CD8-positive, alpha-beta T cell (primary cell): ENCODE measurements at regions of chr17 and their contacts with region 1.

Region 1: DNA sequence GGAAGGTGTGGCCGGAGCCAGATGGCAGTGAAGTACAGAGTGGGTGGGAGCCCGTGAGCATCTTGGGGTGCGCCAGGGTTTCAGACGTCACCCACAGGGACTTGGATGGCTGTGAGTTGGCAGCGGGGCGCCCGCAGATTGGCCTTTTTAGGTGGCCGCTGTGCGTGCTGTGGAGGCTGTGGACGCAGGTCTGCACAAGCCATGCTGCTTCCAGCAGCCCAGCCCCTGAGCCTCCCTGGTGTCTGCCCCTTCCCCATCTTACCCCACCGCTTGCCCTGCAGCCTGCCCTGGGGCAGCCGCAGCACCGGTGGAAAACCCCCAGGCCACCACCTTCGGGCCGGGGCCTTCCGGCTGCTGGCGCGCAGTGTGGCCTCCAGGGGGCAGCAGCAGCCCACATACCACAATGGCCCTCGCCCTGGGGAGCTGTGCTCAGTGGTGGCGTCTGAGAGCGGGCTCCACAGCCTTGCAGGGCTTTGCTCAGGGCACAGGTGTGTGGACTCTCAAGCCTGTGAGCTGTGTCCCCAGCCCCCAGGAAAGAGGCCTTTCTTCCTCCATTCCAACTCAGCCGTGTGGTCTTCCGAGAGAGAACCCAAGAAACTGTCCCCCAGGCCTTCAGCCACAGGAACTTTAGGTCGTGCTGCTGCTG is 11.8 kb downstream of the ENDOV start:
- DNase-seq: peak; percentile 77 to 91 (median 85)
- ATAC-seq: peak; percentile 98
- H3K4me3 ChIP-seq: no peak overlapping the region
- H3K4me3 Mint-ChIP-seq: no peak overlapping the region
- H3K27ac ChIP-seq: no peak overlapping the region
- H3K27ac Mint-ChIP-seq: no peak overlapping the region
- H3K4me1 ChIP-seq: peaks cover 11% of the 10 kb centered on the region
- H3K4me1 Mint-ChIP-seq: peaks cover 9% of the 10 kb centered on the region
- H3K27me3 ChIP-seq: no peaks in the 10 kb centered on the region
- H3K27me3 Mint-ChIP-seq: no peaks in the 10 kb centered on the region
- CTCF ChIP-seq: peak; percentile 85

Region 2: GRCh38 chr17:80414803-80415625 is 11.8 kb before region 1 on chr17 and contains the start of gene ENDOV:
- CTCF ChIA-PET with region 1: interaction called, 5 read pairs
- POLR2A ChIA-PET with region 1: interaction called, 4 read pairs
- intact Hi-C with region 1: loop called in 1 of 2 experiments (anchors 1 kb)
- DNase-seq: peak; percentile 87 to 99 (median 95)
- ATAC-seq: peak; percentile 83
- H3K4me3 ChIP-seq: peak within 1 kb of the TSS; percentile 79 to 97
- H3K4me3 Mint-ChIP-seq: peak within 1 kb of the TSS; percentile 85
- H3K27ac ChIP-seq: peak within 1 kb of the TSS; percentile 82 to 87
- H3K27ac Mint-ChIP-seq: peak within 1 kb of the TSS; percentile 87
- H3K4me1 ChIP-seq: peaks cover 18% of the 10 kb centered on the region
- H3K4me1 Mint-ChIP-seq: peaks cover 26% of the 10 kb centered on the region
- H3K27me3 ChIP-seq: peaks cover 0 to 4% of the 10 kb centered on the region in 2 experiments
- H3K27me3 Mint-ChIP-seq: no peaks in the 10 kb centered on the region
- CTCF ChIP-seq: no peak
- total RNA-seq, gene ENDOV: 8.2 to 11.6 TPM

Region 3: DNA sequence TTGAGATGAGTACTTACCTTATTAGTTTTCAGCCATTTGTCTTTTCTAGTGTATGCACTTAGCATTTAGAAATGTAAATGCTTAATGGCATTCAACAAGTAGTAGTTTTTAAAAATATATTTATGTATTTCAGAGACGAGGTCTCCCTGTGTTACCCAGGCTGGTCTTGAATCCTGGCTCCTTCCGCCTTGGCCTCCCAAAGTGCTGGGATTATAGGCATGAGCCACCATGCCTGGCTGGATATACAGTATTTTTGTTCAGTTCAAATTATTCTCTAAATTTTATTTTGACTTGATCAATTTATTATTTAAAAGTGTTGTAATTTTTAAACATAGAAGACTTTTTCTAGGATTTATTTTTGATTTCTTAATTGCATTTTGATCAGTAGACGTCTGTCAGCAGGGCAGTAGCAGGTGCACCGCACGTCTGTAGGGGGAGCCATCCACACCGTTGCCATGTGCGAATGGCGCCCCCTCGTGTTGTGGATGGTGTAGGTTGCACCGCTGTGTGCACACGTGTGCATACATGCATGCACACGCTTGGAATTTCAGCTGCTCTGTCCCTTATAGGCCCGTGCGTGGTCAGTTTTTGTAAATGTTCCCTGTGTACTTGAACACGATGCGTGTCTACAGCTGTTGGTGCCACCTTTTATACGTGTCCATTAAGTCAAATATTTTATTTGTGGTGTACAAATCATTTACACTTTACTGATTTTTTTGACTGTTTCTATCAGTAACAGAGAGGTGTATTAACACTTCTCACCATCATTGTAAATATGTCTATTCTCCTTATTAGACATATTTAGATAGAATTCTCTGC is 148.5 kb after region 1 on chr17:
- CTCF ChIA-PET with region 1: interaction called, 9 read pairs
- POLR2A ChIA-PET with region 1: no interaction called
- intact Hi-C with region 1: loop called (anchors 1 to 2 kb)
- DNase-seq: peak; percentile 80 to 94 (median 92)
- ATAC-seq: peak; percentile 100
- H3K4me3 ChIP-seq: no peak overlapping the region
- H3K4me3 Mint-ChIP-seq: no peak overlapping the region
- H3K27ac ChIP-seq: no peak overlapping the region
- H3K27ac Mint-ChIP-seq: no peak overlapping the region
- H3K4me1 ChIP-seq: no peaks in the 10 kb centered on the region
- H3K4me1 Mint-ChIP-seq: peaks cover 9% of the 10 kb centered on the region
- H3K27me3 ChIP-seq: no peaks in the 10 kb centered on the region
- H3K27me3 Mint-ChIP-seq: no peaks in the 10 kb centered on the region
- CTCF ChIP-seq: peak; percentile 100

Region 4: DNA sequence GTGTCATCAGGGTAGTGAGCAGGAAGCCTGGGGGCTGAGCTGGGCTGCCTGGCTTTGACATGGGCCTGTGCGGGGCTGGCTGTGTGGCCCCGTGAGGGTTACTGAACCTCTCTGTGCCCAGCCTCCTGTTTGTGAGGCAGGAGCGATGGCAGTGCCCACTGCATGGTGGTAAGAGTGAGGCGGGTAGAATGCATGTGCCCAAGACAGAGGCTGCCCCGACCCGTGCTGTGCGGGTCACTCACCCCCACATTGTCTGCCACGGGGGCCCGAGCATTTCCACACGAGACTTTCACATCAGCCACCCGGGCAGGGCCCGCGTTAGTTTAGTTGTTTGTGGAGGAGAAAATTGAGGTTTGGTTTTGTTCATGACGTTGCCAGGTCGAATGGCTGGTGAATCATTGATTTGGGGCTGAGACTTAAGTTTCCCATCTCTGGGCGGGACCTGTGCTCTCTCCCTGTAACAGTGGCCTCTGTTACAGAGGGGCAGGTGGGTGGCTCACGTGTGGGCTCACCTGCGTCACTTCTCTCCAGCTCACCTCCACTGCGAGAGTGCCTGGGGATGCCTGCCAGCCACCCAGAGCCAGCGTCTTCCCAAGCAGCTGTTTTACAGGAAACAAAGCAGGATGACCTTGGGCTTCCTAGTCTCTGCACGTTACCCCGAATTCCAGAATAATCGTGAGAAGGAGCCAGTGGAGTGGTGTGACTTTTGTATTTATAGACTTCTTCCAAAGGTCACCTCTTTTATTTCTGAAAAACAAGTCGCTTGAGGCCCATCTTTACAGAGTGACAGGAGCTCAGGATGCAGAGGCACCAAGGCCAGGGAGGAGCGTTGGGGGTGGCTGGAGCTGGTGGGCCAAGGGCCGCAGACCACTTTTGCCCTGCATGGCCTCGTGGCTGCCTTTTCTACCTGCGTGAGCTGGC is 268.4 kb after region 1 on chr17:
- CTCF ChIA-PET with region 1: no interaction called
- POLR2A ChIA-PET with region 1: no interaction called
- intact Hi-C with region 1: no loop called
- DNase-seq: peak in 1 of 9 experiments; percentile 21
- ATAC-seq: peak; percentile 58
- H3K4me3 ChIP-seq: no peak overlapping the region
- H3K4me3 Mint-ChIP-seq: no peak overlapping the region
- H3K27ac ChIP-seq: no peak overlapping the region
- H3K27ac Mint-ChIP-seq: peak overlapping the region; percentile 85
- H3K4me1 ChIP-seq: peaks cover 11% of the 10 kb centered on the region
- H3K4me1 Mint-ChIP-seq: peaks cover 40% of the 10 kb centered on the region
- H3K27me3 ChIP-seq: no peaks in the 10 kb centered on the region
- H3K27me3 Mint-ChIP-seq: no peaks in the 10 kb centered on the region
- CTCF ChIP-seq: no peak

Region 5: GRCh38 chr17:80899402-80900268 is 472.8 kb after region 1 on chr17:
- CTCF ChIA-PET with region 1: interaction called, 27 read pairs
- POLR2A ChIA-PET with region 1: no interaction called
- intact Hi-C with region 1: loop called in 1 of 2 experiments (anchors 1 kb)
- DNase-seq: peak; percentile 58 to 84 (median 78)
- ATAC-seq: peak; percentile 88
- H3K4me3 ChIP-seq: no peak overlapping the region
- H3K4me3 Mint-ChIP-seq: no peak overlapping the region
- H3K27ac ChIP-seq: no peak overlapping the region
- H3K27ac Mint-ChIP-seq: no peak overlapping the region
- H3K4me1 ChIP-seq: peaks cover 5% of the 10 kb centered on the region
- H3K4me1 Mint-ChIP-seq: peaks cover 24% of the 10 kb centered on the region
- H3K27me3 ChIP-seq: no peaks in the 10 kb centered on the region
- H3K27me3 Mint-ChIP-seq: no peaks in the 10 kb centered on the region
- CTCF ChIP-seq: peak; percentile 97

Region 6: DNA sequence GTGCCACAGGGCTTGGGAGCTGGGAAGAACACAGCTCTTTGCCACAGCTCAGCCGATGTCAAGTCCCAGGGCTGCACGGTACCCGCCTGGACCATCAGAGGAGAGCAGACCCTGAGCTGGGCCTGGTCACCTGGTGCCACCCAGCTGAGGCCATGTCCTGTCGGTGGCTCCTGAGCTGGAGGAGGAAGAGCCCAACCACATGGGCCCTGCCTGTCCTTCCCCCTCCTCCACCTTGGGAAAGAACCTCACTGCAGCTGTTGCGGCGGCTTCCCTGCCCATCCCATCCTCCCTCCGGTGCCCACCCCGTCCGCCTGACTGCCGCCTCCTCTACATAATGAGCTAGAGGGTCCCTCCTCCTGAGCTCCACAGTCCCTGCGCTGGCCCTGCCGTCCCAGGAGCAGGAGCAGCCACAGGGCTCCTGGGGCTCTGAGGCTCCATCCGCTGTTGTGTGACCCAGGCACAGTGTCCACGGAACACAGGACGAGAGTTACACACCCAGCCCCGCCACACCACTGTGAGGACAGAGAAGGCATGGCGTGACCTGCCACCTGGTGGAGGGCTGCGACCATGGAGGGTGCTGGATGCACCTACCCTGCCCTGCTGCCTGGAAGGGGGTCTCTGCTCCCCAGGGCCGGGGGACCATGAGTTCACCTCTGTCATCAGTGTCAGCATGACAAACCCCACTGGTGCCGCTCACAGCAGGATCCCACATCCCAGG is 543.4 kb after region 1 on chr17:
- CTCF ChIA-PET with region 1: interaction called, 53 read pairs
- POLR2A ChIA-PET with region 1: interaction called, 5 read pairs
- intact Hi-C with region 1: loop called in 1 of 2 experiments (anchors 1 kb)
- DNase-seq: peak in 7 of 9 experiments; percentile 18 to 68 (median 52)
- ATAC-seq: peak; percentile 70
- H3K4me3 ChIP-seq: no peak overlapping the region
- H3K4me3 Mint-ChIP-seq: no peak overlapping the region
- H3K27ac ChIP-seq: no peak overlapping the region
- H3K27ac Mint-ChIP-seq: no peak overlapping the region
- H3K4me1 ChIP-seq: peaks cover 19% of the 10 kb centered on the region
- H3K4me1 Mint-ChIP-seq: peaks cover 5% of the 10 kb centered on the region
- H3K27me3 ChIP-seq: no peaks in the 10 kb centered on the region
- H3K27me3 Mint-ChIP-seq: no peaks in the 10 kb centered on the region
- CTCF ChIP-seq: peak; percentile 26

Region 7: GRCh38 chr17:80981062-80981902 is 554.5 kb after region 1 on chr17:
- CTCF ChIA-PET with region 1: interaction called, 32 read pairs
- POLR2A ChIA-PET with region 1: no interaction called
- intact Hi-C with region 1: loop called (anchors 1 kb)
- DNase-seq: peak in 6 of 9 experiments; percentile 25 to 66 (median 56)
- ATAC-seq: peak; percentile 74
- H3K4me3 ChIP-seq: no peak overlapping the region
- H3K4me3 Mint-ChIP-seq: no peak overlapping the region
- H3K27ac ChIP-seq: no peak overlapping the region
- H3K27ac Mint-ChIP-seq: no peak overlapping the region
- H3K4me1 ChIP-seq: peaks cover 6% of the 10 kb centered on the region
- H3K4me1 Mint-ChIP-seq: peaks cover 7% of the 10 kb centered on the region
- H3K27me3 ChIP-seq: peaks cover 2 to 5% of the 10 kb centered on the region in 2 experiments
- H3K27me3 Mint-ChIP-seq: peaks cover 23% of the 10 kb centered on the region
- CTCF ChIP-seq: peak; percentile 88

Region 8: GRCh38 chr17:81101614-81102306 is 675.0 kb after region 1 on chr17:
- CTCF ChIA-PET with region 1: interaction called, 7 read pairs
- POLR2A ChIA-PET with region 1: no interaction called
- intact Hi-C with region 1: loop called in 1 of 2 experiments (anchors 2 kb)
- DNase-seq: peak; percentile 77 to 93 (median 86)
- ATAC-seq: peak; percentile 99
- H3K4me3 ChIP-seq: no peak overlapping the region
- H3K4me3 Mint-ChIP-seq: no peak overlapping the region
- H3K27ac ChIP-seq: no peak overlapping the region
- H3K27ac Mint-ChIP-seq: no peak overlapping the region
- H3K4me1 ChIP-seq: peaks cover 20% of the 10 kb centered on the region
- H3K4me1 Mint-ChIP-seq: peaks cover 9% of the 10 kb centered on the region
- H3K27me3 ChIP-seq: no peaks in the 10 kb centered on the region
- H3K27me3 Mint-ChIP-seq: no peaks in the 10 kb centered on the region
- CTCF ChIP-seq: peak; percentile 100